Activated CD8-positive, alpha-beta memory T cell treated with anti-CD3 and anti-CD28 coated beads, Interleukin-2, amount 10 ng/mL, durations not matched to agents 7 days and 5 days (primary cell): ENCODE measurements at regions of chr18 and their contacts with region 1.

Region 1: GRCh38 chr18:34661464-34662111 is 48.5 kb upstream of the DTNA start:
- DNase-seq: no peak
- ATAC-seq: no peak
- H3K4me3 Mint-ChIP-seq: no peak overlapping the region
- H3K27ac Mint-ChIP-seq: no peak overlapping the region
- H3K4me1 Mint-ChIP-seq: no peaks in the 10 kb centered on the region
- H3K27me3 Mint-ChIP-seq: peaks cover 15% of the 10 kb centered on the region

Region 2: DNA sequence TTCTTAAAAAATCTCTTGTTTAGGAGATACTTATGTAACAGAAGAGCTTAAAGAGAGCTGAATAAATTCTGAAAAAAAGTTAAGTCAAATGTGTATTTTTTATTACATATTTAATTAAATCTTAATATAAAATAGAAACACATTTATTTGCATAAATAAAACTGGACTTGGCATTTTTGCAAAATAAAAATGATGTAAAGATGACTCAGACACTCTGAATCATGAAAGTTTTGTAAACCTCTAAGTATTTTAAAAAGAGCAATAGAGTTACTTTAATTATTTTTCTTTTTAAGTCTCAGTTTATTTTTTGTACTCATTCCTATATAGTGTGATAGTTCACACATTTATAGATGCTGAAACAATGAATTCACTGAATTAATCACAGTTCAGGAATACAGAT is 61.5 kb before region 1 on chr18:
- CTCF ChIA-PET with region 1: no interaction called
- DNase-seq: no peak
- ATAC-seq: no peak
- H3K4me3 Mint-ChIP-seq: no peak overlapping the region
- H3K27ac Mint-ChIP-seq: no peak overlapping the region
- H3K4me1 Mint-ChIP-seq: no peaks in the 10 kb centered on the region
- H3K27me3 Mint-ChIP-seq: no peaks in the 10 kb centered on the region

Region 3: GRCh38 chr18:34650121-34650545 is 11.5 kb before region 1 on chr18:
- CTCF ChIA-PET with region 1: interaction called, 22 read pairs
- DNase-seq: no peak
- ATAC-seq: no peak
- H3K4me3 Mint-ChIP-seq: no peak overlapping the region
- H3K27ac Mint-ChIP-seq: no peak overlapping the region
- H3K4me1 Mint-ChIP-seq: peaks cover 1% of the 10 kb centered on the region
- H3K27me3 Mint-ChIP-seq: no peaks in the 10 kb centered on the region

Region 4: GRCh38 chr18:34787931-34788532 is 126.4 kb after region 1 on chr18:
- CTCF ChIA-PET with region 1: interaction called, 36 read pairs
- DNase-seq: no peak
- ATAC-seq: peak; percentile 30
- H3K4me3 Mint-ChIP-seq: no peak overlapping the region
- H3K27ac Mint-ChIP-seq: no peak overlapping the region
- H3K4me1 Mint-ChIP-seq: peaks cover 3% of the 10 kb centered on the region
- H3K27me3 Mint-ChIP-seq: peaks cover 11% of the 10 kb centered on the region